ENCODE measurements at regions of chr14 and their contacts with region 1.

Region 1: GRCh38 chr14:28542040-28542439 is 224.5 kb upstream of the FOXG1 start:
- DNase-seq: peak; percentile 16
- H3K27ac ChIP-seq: no peak overlapping the region
- CTCF ChIP-seq: no peak

Region 2: GRCh38 chr14:28409991-28410390 is 132.0 kb before region 1 on chr14:
- CTCF ChIA-PET with region 1: interaction called, 10 read pairs
- POLR2A ChIA-PET with region 1: no interaction called
- DNase-seq: no peak
- H3K27ac ChIP-seq: no peak overlapping the region
- CTCF ChIP-seq: no peak